ENCODE measurements at regions of chr17 and their contacts with region 1.

Region 1: DNA sequence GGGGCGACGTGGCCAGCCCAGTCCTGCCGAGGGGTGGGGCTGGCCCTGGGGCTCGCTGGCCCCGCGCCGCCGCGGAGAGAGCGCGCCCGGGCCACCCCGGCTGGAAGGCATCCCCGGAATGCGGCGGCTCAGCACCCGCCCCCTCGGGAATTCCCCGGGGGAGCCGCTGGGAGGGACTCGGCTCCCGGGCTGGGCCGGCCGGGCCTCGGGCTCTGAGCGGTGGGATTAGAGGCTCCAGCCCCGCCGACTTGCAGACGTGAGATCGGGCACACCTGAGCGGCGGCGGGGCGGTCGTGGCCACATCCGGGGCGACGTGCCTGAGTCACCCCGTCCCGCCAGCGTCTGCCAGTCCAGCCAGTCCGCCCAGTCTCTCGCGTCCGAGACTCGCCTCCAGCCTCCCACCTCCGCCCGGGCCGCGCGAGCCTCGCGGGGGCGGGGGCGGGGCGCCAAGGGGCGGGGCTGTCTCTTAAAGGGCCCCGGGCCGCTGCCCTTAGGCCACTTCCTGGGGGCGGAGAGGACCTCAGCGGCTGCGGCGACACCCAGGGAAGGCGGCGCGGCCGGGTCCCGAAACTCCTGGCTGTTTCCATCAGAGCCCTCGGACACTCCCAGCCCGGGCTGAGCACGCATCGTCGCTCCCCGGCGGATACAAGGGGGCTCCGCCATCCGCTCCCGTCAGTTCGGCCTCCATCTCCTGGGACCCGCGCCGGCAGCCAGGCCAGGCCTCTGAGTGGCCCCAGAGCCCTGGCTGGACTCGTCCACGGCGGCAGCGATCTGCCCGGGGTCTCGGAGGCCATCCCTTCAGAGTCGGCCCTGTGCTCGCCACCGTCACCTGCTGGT is at the start of gene KCTD11:
- DNase-seq: peak; percentile 93
- ATAC-seq: peak; percentile 79 to 80
- total RNA-seq, gene KCTD11: 5.3 to 5.9 TPM

Region 2: DNA sequence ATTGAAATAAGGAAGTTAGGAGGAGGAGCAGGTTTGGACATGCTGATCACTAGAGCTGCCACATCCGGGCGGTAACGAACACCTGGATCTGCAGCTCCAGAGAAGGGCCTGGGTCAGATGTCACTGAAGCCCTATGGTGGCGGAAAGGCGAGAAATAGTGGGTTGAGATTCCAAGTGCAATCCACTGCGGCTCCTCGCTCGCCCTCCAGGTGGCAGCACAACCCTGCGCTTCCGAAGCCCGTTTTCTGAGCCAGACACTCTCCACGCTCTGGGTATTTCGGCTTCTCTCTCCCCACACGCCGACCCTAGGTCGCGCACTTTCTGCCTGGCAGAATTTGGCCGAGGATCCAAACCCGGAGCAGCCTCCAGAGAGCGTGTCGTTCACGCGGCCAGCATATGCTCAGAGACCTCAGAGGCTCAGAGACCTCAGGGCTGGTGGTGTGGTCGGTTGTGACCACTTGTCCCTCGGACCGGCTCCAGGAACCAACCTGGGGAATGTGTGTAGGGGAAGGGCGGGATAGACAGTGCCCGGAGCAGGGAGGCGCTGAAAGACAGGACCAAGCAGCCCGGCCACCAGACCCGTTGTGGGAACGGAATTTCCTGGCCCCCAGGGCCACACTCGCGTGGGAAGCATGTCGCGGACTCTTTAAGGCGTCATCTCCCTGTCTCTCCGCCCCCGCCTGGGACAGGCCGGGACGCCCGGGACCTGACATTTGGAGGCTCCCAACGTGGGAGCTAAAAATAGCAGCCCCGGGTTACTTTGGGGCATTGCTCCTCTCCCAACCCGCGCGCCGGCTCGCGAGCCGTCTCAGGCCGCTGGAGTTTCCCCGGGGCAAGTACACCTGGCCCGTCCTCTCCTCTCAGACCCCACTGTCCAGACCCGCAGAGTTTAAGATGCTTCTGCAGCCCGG is 71.1 kb before region 1 on chr17:
- intact Hi-C with region 1: loop called in 1 of 2 experiments (anchors 5 kb)
- DNase-seq: peak; percentile 85
- ATAC-seq: peak; percentile 64 to 82

Region 3: GRCh38 chr17:7306911-7307686 is 44.8 kb before region 1 on chr17 and contains the start of gene EIF5A:
- intact Hi-C with region 1: no loop called
- DNase-seq: peak; percentile 100
- ATAC-seq: peak; percentile 92 to 93
- total RNA-seq, gene EIF5A: 274 to 374 TPM

Region 4: DNA sequence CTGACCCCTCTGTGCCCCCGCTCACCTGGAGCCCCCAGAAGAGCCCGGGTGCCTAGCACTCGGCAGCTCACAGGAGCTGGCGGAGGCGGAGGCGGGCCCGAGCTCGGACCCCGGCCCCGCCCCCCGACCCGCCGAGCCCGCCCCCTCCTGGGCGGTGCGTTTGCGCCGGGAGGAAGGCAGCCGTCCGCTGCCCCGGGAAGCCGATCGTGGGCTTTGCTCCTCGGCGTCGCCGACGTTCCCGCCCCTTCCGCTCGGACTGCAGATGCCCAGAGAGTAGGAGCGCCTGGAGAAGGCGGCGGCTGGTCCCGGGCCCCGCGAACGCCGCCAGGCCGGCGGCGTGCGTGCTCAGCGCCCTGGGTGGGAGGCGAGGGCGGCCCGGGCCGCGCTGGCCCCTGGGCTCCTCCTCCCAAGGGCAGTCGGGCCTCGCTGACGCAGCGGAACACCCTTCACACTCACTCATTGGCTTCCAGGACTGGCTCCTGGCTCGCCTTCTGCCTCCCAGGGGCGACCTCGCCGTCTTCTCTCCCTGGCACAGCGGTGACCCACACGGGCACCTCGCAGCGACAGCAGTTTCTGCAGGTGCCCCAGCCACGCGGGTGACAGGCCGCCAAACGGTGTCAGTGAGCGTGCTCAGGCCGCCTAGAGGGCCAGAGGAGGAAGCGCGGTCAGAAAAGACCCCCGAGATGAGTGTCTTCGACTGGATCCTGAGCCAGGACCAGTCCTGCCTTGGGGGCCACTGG is 42.7 kb after region 1 on chr17 and contains the start of gene PLSCR3:
- intact Hi-C with region 1: loop called in 1 of 2 experiments (anchors 5 kb)
- DNase-seq: peak; percentile 92
- ATAC-seq: peak; percentile 95
- total RNA-seq, gene PLSCR3: 22.4 to 29.0 TPM

Region 5: DNA sequence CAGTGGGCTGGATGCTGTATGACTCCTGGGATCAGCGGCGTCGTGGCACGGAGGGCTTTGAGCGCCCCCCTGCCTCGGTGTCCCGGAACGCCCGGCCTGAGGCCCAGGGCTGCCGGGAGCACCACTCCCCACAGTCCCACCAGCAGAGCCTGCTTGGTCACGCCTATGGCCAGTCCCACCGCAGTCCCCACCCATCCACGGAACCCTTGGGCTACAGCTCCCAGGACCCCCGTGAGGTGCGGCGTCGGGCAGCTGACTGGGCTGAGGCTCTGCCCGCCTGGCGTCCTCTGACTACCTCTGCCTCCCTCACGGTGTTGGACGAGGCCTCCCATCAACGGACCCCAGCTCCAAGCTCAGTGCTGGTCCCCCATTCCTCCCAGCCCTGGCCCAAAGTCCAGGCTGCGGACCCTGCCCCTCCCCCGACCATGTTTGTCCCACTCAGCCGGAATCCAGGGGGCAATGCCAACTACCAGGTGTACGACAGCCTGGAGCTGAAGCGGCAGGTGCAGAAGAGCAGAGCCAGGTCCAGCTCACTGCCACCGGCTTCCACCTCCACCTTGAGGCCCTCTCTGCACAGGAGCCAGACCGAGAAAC is 75.1 kb after region 1 on chr17:
- intact Hi-C with region 1: no loop called
- DNase-seq: no peak
- ATAC-seq: peak in 1 of 2 donors; percentile 18

Region 6: GRCh38 chr17:7561028-7561575 is 209.2 kb after region 1 on chr17:
- intact Hi-C with region 1: loop called in 1 of 2 experiments (anchors 2 kb)
- DNase-seq: peak; percentile 93
- ATAC-seq: peak; percentile 76 to 83